Psoas muscle (tissue), 8 donors: ENCODE measurements at regions of chr16 and their contacts with region 1.

Region 1: DNA sequence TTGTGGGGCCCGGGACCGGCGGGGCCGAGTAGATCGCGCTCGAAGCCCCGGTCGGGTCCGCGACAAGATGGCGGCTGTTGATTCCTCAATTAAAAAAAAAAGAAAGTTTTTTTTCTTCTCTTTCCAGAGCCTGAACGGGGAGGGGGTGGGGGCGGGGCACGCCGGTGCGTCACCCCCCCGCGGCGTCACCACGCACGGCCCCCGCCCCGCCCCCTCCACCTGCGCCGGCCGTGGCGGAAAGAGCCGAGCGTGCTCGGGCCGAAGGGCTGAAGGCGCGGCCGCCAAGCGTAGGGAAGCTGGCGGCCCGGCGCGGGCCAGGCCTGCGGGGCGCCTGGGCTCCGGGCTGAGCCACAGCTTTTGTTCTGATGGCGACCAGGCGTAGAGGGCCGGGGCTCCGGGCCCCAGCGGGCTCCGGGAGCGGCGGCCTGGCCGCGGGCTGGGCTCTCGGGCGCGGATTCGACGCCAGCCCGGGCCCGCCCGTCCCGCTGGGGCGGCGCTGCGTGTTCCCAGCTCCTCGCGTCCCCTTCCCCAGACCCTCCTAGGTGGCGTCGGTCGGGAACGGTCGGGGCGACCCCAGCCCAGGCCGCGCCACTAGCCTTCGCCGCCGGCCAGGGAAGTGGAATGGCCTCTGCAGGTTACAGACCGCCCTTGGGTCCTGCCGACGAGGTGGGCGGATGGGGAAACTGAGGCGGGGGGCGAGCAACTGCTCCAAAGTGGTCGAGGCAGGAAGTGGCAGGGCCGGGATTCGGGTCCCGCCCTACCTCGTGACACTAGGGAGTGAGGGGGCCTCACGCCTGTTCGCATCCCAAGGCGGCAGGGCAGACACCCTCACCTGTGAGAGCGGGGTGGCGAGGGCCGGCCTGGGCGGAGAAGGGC is at the start of gene CREBBP:
- DNase-seq: peak; percentile 90 to 92
- ATAC-seq: peak; percentile 88 to 94 (median 90)
- H3K4me3 ChIP-seq: peak within 1 kb of the TSS; percentile 90
- H3K27ac ChIP-seq: peak within 1 kb of the TSS; percentile 94
- H3K4me1 ChIP-seq: peaks cover 28% of the 10 kb centered on the region
- H3K27me3 ChIP-seq: no peaks in the 10 kb centered on the region
- CTCF ChIP-seq: no peak
- total RNA-seq, gene CREBBP: 44.1 to 54.9 (median 50.8) TPM

Region 2: GRCh38 chr16:3383045-3383448 is 497.8 kb before region 1 on chr16:
- intact Hi-C with region 1: no loop called
- DNase-seq: no peak
- ATAC-seq: no peak
- H3K4me3 ChIP-seq: no peak overlapping the region
- H3K27ac ChIP-seq: no peak overlapping the region
- H3K4me1 ChIP-seq: no peaks in the 10 kb centered on the region
- H3K27me3 ChIP-seq: no peaks in the 10 kb centered on the region
- CTCF ChIP-seq: no peak

Region 3: GRCh38 chr16:3520413-3520812 is 360.4 kb before region 1 on chr16:
- intact Hi-C with region 1: loop called in 1 of 2 experiments (anchors 10 kb)
- DNase-seq: no peak
- ATAC-seq: no peak
- H3K4me3 ChIP-seq: no peak overlapping the region
- H3K27ac ChIP-seq: no peak overlapping the region
- H3K4me1 ChIP-seq: no peaks in the 10 kb centered on the region
- H3K27me3 ChIP-seq: no peaks in the 10 kb centered on the region
- CTCF ChIP-seq: no peak

Region 4: GRCh38 chr16:3690470-3690928 is 190.4 kb before region 1 on chr16:
- intact Hi-C with region 1: loop called in 1 of 2 experiments (anchors 2 kb)
- DNase-seq: peak; percentile 91 to 96
- ATAC-seq: peak; percentile 94 to 98 (median 96)
- H3K4me3 ChIP-seq: peak overlapping the region; percentile 46
- H3K27ac ChIP-seq: peak overlapping the region; percentile 52
- H3K4me1 ChIP-seq: peaks cover 30% of the 10 kb centered on the region
- H3K27me3 ChIP-seq: no peaks in the 10 kb centered on the region
- CTCF ChIP-seq: peak; percentile 96

Region 5: DNA sequence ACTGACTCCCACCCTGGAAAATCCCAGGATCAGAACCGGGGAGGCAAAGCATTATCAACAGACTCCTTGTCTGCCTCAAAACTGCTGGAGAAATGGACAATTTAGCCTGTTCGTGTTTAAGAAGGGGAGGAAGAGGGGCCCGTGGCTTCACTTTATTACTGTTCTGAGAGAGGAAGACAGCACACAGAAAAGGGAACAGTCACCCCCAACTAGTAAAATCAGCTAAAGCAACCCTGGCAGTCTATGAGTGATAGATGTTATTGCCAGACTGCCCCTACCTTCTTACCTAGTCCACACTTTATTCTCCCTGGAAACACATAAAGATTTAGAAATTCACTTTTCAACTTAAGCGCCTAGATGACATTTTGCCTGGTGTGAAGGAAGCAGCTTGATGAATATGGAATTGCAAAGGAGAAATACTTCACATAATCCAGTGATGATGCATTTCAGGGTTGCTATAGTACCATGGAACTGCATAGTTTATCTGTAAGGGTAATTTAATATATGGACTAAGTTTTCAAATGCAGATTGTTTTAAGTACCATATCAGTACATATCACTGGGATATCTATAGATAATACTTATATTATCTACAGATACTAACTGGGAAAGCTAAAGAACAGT is 126.7 kb before region 1 on chr16:
- intact Hi-C with region 1: loop called in 1 of 2 experiments (anchors 2 kb)
- DNase-seq: no peak
- ATAC-seq: peak in 3 of 4 donors; percentile 36 to 59 (median 44)
- H3K4me3 ChIP-seq: no peak overlapping the region
- H3K27ac ChIP-seq: no peak overlapping the region
- H3K4me1 ChIP-seq: peaks cover 27% of the 10 kb centered on the region
- H3K27me3 ChIP-seq: no peaks in the 10 kb centered on the region
- CTCF ChIP-seq: no peak

Region 6: GRCh38 chr16:3797904-3798811 is 82.7 kb before region 1 on chr16:
- intact Hi-C with region 1: loop called in 1 of 2 experiments (anchors 5 kb)
- DNase-seq: no peak
- ATAC-seq: no peak
- H3K4me3 ChIP-seq: no peak overlapping the region
- H3K27ac ChIP-seq: no peak overlapping the region
- H3K4me1 ChIP-seq: peaks cover 57% of the 10 kb centered on the region
- H3K27me3 ChIP-seq: no peaks in the 10 kb centered on the region
- CTCF ChIP-seq: no peak

Region 7: GRCh38 chr16:3825103-3825502 is 55.8 kb before region 1 on chr16:
- intact Hi-C with region 1: loop called in 1 of 2 experiments (anchors 5 kb)
- DNase-seq: no peak
- ATAC-seq: no peak
- H3K4me3 ChIP-seq: no peak overlapping the region
- H3K27ac ChIP-seq: no peak overlapping the region
- H3K4me1 ChIP-seq: peaks cover 84% of the 10 kb centered on the region
- H3K27me3 ChIP-seq: no peaks in the 10 kb centered on the region
- CTCF ChIP-seq: no peak